Activated T-helper 1 cell treated with anti-CD3 and anti-CD28 coated beads, Interleukin-12 subunit alpha, Interleukin-12 subunit beta, Interleukin-2, Interleukin-4 antibody, amounts not matched to agents 30 ng/mL and 10 ng/mL and 1 ng/mL, durations not matched to agents 14 hours and 24 hours and 36 hours (primary cell): ENCODE measurements at regions of chr6 and their contacts with region 1.

Region 1: GRCh38 chr6:133837801-133838349 is 51.0 kb upstream of the TCF21 start:
- DNase-seq: peak; percentile 29
- H3K4me3 Mint-ChIP-seq: peak overlapping the region; percentile 27
- H3K27ac Mint-ChIP-seq: no peak overlapping the region
- H3K4me1 Mint-ChIP-seq: no peaks in the 10 kb centered on the region
- H3K27me3 Mint-ChIP-seq: peaks cover 15% of the 10 kb centered on the region

Region 2: DNA sequence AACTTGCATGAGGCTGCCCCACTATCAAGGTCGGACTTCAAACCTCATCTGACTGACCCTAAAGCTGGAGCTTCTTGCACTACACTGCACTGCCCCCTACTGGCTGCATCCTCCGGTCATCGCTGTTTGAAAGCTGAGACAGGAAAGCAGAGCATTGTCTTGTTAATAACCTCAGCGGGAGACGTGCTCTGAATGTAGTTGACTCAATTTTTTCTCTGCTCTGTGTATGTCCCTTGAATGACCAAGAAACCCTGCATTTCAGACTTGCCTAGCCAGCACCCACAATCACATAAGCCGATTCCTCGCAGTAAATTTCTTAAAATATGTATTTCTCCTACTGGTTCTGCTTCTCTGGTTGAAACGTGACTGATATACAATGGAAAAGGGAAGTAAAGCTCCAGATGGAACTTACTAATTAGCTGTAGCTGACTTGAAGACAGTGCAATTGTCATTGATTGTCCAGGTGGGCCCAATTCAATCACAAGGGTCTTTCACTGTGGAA is 78.8 kb after region 1 on chr6:
- intact Hi-C with region 1: loop called (anchors 1 kb)
- DNase-seq: peak; percentile 56
- H3K4me3 Mint-ChIP-seq: no peak overlapping the region
- H3K27ac Mint-ChIP-seq: no peak overlapping the region
- H3K4me1 Mint-ChIP-seq: no peaks in the 10 kb centered on the region
- H3K27me3 Mint-ChIP-seq: peaks cover 29% of the 10 kb centered on the region

Region 3: GRCh38 chr6:134097114-134097707 is 259.3 kb after region 1 on chr6:
- intact Hi-C with region 1: loop called (anchors 1 kb)
- DNase-seq: peak; percentile 38
- H3K4me3 Mint-ChIP-seq: no peak overlapping the region
- H3K27ac Mint-ChIP-seq: no peak overlapping the region
- H3K4me1 Mint-ChIP-seq: peaks cover 6% of the 10 kb centered on the region
- H3K27me3 Mint-ChIP-seq: peaks cover 22% of the 10 kb centered on the region